ENCODE measurements at regions of chr3 and their contacts with region 1.

Region 1: GRCh38 chr3:38164966-38165680 is at the start of gene OXSR1:
- DNase-seq: peak; percentile 99
- H3K4me3 Mint-ChIP-seq: peak within 1 kb of the TSS; percentile 87
- H3K27ac Mint-ChIP-seq: peak within 1 kb of the TSS; percentile 93
- H3K4me1 Mint-ChIP-seq: peaks cover 29% of the 10 kb centered on the region
- H3K27me3 Mint-ChIP-seq: no peaks in the 10 kb centered on the region
- CTCF ChIP-seq: no peak
- total RNA-seq, gene OXSR1: 71.7 and 75.5 TPM in 2 replicates

Region 2: GRCh38 chr3:38154033-38154494 is 11.1 kb before region 1 on chr3:
- CTCF ChIA-PET with region 1: interaction called, 8 read pairs
- POLR2A ChIA-PET with region 1: interaction called, 131 read pairs
- intact Hi-C with region 1: loop called (anchors 1 kb)
- DNase-seq: peak; percentile 84
- H3K4me3 Mint-ChIP-seq: no peak overlapping the region
- H3K27ac Mint-ChIP-seq: peak overlapping the region; percentile 74
- H3K4me1 Mint-ChIP-seq: peaks cover 23% of the 10 kb centered on the region
- H3K27me3 Mint-ChIP-seq: no peaks in the 10 kb centered on the region
- CTCF ChIP-seq: no peak

Region 3: GRCh38 chr3:38186781-38187180 is 21.7 kb after region 1 on chr3:
- CTCF ChIA-PET with region 1: no interaction called
- POLR2A ChIA-PET with region 1: interaction called, 27 read pairs
- intact Hi-C with region 1: no loop called
- DNase-seq: no peak
- H3K4me3 Mint-ChIP-seq: no peak overlapping the region
- H3K27ac Mint-ChIP-seq: no peak overlapping the region
- H3K4me1 Mint-ChIP-seq: no peaks in the 10 kb centered on the region
- H3K27me3 Mint-ChIP-seq: no peaks in the 10 kb centered on the region
- CTCF ChIP-seq: no peak

Region 4: DNA sequence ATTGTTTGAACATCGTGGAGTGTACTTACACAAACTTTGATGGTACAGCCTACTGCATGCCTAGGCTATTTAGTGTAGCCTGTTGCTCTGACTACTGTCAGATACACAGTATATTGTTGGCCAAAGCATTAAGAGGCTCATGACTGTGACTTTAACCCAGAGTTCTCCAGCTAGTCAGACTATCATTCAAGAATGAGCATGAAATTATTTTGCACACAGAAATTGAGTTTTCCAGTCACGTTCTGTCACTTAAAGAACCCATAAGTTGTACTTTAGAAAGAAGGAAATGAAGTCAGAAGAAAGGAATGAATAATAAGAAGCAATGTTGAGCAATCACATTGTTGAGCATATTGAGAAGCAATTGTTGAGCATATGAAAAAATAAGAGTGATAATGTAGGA is 62.9 kb after region 1 on chr3:
- CTCF ChIA-PET with region 1: no interaction called
- POLR2A ChIA-PET with region 1: interaction called, 25 read pairs
- intact Hi-C with region 1: no loop called
- DNase-seq: peak; percentile 36
- H3K4me3 Mint-ChIP-seq: peak overlapping the region; percentile 32
- H3K27ac Mint-ChIP-seq: peak overlapping the region; percentile 93
- H3K4me1 Mint-ChIP-seq: peaks cover 19% of the 10 kb centered on the region
- H3K27me3 Mint-ChIP-seq: no peaks in the 10 kb centered on the region
- CTCF ChIP-seq: no peak

Measured in MCF 10A (cell line).